BJ (cell line): ENCODE measurements at regions of chr9 and their contacts with region 1.

Region 1: DNA sequence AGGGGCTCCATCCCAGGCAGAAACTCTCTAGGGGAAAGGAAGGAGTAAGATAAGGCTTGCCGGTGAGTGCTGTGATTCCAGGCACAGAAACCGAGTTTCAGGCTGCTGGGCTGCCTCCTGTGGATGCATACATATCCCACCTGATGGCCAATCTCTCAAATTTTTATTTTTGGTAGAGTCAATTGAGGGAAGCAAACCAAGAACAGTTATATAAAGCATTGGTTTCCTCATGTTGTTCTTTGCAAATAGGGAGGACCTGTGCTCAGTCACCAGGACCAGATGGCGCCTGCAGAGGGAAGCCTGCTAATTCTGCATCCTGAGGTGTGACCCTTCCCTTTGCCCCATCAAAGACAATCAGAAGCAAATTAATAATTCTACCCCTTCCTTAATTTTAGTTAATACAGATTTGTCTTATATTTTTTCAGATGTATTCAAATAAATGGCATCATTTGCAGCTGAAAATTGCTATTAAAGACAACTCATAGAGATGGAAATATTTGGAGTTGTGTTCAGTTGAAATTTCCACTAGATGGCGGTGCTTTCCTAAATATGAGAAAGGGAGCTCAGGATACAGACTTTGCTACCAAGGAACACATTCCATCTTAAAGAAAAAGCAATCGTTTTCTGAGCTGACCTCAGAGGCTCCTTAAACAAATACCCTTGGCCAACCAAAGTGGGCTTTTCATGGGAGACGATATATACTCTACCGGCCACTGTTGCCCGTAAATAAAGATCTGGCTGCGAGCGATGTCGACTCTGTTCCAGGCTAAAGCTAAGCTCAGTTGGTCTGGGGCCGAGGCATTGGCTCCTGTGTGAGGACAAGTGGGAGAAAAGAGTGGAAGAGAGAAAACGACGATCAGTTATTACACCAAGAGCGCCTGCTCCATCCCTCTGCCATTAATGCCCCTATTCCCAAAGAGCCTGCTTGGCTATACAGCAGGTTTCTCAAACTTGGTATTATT is 225.7 kb upstream of the KLF9 start:
- DNase-seq: peak; percentile 14
- H3K4me3 ChIP-seq: no peak overlapping the region
- H3K27me3 ChIP-seq: peaks cover 6% of the 10 kb centered on the region; the same call in 1 of the 2 replicates
- CTCF ChIP-seq: peak; percentile 62

Region 2: DNA sequence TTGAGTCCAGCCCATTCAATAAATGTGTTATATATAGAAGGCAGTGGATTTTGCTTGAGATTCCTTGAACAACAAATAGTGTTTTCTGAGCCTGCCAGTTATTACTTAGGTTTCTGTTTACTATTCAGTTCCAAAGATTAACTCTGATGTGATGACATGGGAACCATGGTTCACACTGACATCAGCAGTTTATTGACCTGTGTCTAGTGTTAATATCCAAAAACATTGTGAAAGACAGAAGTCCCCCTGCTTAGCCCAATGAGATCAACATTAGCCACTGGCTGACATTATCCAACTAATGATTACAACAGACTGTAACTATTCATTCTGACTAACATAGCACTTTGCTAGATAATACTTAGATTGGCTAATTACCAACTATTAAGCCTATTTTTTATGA is 982.9 kb before region 1 on chr9:
- CTCF ChIA-PET with region 1: no interaction called
- POLR2A ChIA-PET with region 1: no interaction called
- DNase-seq: no peak
- H3K4me3 ChIP-seq: no peak overlapping the region
- H3K27me3 ChIP-seq: no peaks in the 10 kb centered on the region
- CTCF ChIP-seq: no peak

Region 3: GRCh38 chr9:70656281-70656680 is 16.1 kb after region 1 on chr9:
- CTCF ChIA-PET with region 1: no interaction called
- POLR2A ChIA-PET with region 1: no interaction called
- DNase-seq: no peak
- H3K4me3 ChIP-seq: no peak overlapping the region
- H3K27me3 ChIP-seq: no peaks in the 10 kb centered on the region
- CTCF ChIP-seq: no peak

Region 4: GRCh38 chr9:71249729-71250317 is 609.7 kb after region 1 on chr9:
- CTCF ChIA-PET with region 1: interaction called, 133 read pairs
- POLR2A ChIA-PET with region 1: no interaction called
- DNase-seq: peak; percentile 19
- H3K4me3 ChIP-seq: no peak overlapping the region
- H3K27me3 ChIP-seq: no peaks in the 10 kb centered on the region
- CTCF ChIP-seq: peak; percentile 84